ENCODE measurements at regions of chr10 and their contacts with region 1.

Region 1: DNA sequence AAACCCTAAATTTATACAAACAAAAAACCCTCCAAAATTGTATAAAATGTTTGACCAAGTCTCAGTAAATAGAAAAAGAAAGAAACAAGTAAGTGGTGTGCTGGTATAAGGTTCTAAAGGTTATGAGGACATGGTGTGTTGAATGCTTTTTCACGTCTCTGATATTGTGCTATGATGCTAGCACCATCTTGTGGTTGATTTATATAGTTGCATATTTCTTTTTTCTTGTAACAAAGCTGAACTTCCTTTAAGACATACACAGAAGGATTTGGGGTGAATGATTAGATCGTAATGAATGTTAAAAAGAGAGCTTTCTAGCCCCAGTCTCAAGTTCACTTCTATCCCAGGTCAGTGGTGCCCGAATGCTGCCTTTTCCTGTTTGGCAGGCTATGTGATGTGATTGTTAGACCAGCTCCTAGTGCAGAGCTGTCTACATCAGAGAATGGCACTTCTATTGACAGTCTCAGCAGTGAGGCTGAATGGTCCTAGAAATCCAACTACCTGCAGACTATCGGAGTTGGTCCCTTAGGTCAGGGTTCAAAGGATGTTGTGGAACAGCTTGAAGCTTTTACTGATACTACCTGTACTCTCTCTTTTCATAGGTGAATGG is 25.0 kb downstream of the VTI1A start:
- DNase-seq: no peak
- ATAC-seq: peak; percentile 80
- H3K4me3 Mint-ChIP-seq: no peak overlapping the region
- H3K27ac Mint-ChIP-seq: peak overlapping the region; percentile 42
- H3K4me1 Mint-ChIP-seq: peaks cover 6% of the 10 kb centered on the region
- H3K27me3 Mint-ChIP-seq: no peaks in the 10 kb centered on the region

Region 2: GRCh38 chr10:111821871-111822270 is 650.1 kb before region 1 on chr10:
- CTCF ChIA-PET with region 1: no interaction called
- POLR2A ChIA-PET with region 1: no interaction called
- intact Hi-C with region 1: no loop called
- DNase-seq: no peak
- ATAC-seq: no peak
- H3K4me3 Mint-ChIP-seq: no peak overlapping the region
- H3K27ac Mint-ChIP-seq: no peak overlapping the region
- H3K4me1 Mint-ChIP-seq: no peaks in the 10 kb centered on the region
- H3K27me3 Mint-ChIP-seq: no peaks in the 10 kb centered on the region

Region 3: DNA sequence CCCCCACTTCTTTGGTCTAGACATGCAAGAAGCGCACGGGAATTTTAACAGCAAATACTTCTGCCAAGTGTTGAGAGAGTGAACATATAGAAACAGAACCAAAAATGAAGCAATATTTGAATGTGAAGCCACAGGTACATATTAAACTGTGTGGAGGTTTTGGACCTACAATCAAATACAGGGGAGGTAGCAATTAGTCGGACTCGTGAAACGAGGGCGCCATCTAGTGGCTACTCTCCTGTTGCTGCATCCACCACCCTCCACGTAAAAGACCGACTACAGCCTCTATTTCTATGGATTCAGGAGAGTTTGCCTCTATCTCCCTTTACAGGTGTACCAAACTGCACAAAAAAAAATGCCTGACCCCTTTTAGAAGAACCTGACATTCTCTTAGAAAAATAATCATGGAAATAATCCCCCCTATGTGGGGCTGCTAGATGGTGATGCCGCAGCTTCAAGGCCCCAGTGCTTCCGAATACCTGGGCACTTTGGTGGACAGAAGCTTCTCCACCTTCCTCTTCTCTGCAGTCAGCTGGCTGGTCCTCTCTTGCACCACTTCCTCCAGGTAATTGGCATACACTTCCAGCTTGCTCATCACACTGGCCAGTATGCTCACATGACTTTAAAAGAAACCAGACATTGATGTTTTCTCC is 157.0 kb before region 1 on chr10:
- CTCF ChIA-PET with region 1: interaction called, 7 read pairs
- POLR2A ChIA-PET with region 1: no interaction called
- intact Hi-C with region 1: loop called in 1 of 2 experiments (anchors 2 kb)
- DNase-seq: peak; percentile 90
- ATAC-seq: peak; percentile 83
- H3K4me3 Mint-ChIP-seq: no peak overlapping the region
- H3K27ac Mint-ChIP-seq: no peak overlapping the region
- H3K4me1 Mint-ChIP-seq: no peaks in the 10 kb centered on the region
- H3K27me3 Mint-ChIP-seq: peaks cover 22% of the 10 kb centered on the region

Region 4: GRCh38 chr10:112442063-112442462 is 29.9 kb before region 1 on chr10:
- CTCF ChIA-PET with region 1: interaction called, 29 read pairs
- POLR2A ChIA-PET with region 1: interaction called, 5 read pairs
- intact Hi-C with region 1: loop called (anchors 2 to 5 kb)
- DNase-seq: no peak
- ATAC-seq: peak; percentile 43
- H3K4me3 Mint-ChIP-seq: no peak overlapping the region
- H3K27ac Mint-ChIP-seq: peak overlapping the region; percentile 79
- H3K4me1 Mint-ChIP-seq: peaks cover 37% of the 10 kb centered on the region
- H3K27me3 Mint-ChIP-seq: no peaks in the 10 kb centered on the region

Region 5: DNA sequence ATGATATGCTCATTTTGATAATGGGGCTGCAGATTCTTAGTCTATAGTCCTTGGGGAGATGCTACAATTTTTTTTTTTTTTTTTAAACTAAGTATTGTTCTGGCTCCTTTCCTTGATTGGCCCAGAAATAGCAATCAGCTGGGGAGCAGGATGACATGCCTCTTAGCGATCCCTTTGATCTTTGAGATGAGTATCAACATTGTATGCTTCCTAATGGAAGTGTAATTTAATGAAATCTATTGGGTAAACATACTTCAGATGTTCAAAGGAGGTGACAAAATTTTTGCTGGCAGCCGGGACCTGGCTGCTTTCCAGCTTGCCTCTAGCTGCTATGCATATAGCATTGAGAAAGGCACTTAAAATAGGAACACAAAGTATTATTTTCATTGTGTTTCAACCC is 18.6 kb after region 1 on chr10:
- CTCF ChIA-PET with region 1: interaction called, 14 read pairs
- POLR2A ChIA-PET with region 1: no interaction called
- intact Hi-C with region 1: no loop called
- DNase-seq: no peak
- ATAC-seq: no peak
- H3K4me3 Mint-ChIP-seq: no peak overlapping the region
- H3K27ac Mint-ChIP-seq: no peak overlapping the region
- H3K4me1 Mint-ChIP-seq: peaks cover 7% of the 10 kb centered on the region
- H3K27me3 Mint-ChIP-seq: no peaks in the 10 kb centered on the region

Region 6: DNA sequence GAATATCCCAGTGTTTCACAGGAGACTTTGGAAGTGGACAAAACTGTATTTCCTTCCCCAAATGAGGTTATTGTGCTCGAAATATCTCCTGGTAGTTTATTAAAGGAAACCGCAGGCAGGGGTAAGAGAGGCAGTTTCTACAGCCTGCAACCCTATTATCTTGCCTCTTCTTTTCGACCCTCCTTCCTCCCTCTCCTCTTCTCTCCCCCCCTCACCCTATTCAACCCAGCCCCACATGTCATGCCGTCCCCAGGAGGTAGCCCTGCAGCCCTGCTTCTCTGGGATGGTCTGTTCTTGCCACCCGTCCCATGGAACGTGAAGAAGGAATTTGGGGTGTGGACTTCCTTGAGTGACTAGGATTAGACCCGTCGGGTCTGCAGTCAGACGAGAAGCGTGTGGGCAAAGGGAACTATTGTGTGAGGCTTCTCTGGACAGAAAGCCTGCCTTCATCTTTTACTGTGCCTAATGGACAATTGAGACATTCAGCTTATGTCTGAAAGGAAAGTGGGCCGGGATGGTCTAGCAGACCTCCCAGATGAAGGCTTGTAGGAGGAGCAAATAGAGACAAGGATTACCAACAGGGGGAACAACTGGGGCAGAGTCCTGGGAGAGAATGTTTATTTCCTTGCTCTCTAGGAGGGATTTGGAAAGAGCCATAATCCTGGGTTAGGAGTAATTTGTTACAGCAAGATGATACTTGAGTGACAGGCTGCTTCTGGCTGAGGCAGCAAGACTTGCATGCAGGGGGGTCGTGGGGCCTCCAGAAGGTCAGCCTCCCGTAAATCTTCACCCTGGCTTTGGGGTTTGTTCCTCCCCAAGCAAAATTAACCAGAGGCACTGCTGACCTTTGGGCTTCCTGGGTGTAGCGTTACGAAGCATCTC is 555.8 kb after region 1 on chr10:
- CTCF ChIA-PET with region 1: no interaction called
- POLR2A ChIA-PET with region 1: no interaction called
- intact Hi-C with region 1: no loop called
- DNase-seq: no peak
- ATAC-seq: no peak
- H3K4me3 Mint-ChIP-seq: no peak overlapping the region
- H3K27ac Mint-ChIP-seq: no peak overlapping the region
- H3K4me1 Mint-ChIP-seq: no peaks in the 10 kb centered on the region
- H3K27me3 Mint-ChIP-seq: peaks cover 11% of the 10 kb centered on the region

Region 7: DNA sequence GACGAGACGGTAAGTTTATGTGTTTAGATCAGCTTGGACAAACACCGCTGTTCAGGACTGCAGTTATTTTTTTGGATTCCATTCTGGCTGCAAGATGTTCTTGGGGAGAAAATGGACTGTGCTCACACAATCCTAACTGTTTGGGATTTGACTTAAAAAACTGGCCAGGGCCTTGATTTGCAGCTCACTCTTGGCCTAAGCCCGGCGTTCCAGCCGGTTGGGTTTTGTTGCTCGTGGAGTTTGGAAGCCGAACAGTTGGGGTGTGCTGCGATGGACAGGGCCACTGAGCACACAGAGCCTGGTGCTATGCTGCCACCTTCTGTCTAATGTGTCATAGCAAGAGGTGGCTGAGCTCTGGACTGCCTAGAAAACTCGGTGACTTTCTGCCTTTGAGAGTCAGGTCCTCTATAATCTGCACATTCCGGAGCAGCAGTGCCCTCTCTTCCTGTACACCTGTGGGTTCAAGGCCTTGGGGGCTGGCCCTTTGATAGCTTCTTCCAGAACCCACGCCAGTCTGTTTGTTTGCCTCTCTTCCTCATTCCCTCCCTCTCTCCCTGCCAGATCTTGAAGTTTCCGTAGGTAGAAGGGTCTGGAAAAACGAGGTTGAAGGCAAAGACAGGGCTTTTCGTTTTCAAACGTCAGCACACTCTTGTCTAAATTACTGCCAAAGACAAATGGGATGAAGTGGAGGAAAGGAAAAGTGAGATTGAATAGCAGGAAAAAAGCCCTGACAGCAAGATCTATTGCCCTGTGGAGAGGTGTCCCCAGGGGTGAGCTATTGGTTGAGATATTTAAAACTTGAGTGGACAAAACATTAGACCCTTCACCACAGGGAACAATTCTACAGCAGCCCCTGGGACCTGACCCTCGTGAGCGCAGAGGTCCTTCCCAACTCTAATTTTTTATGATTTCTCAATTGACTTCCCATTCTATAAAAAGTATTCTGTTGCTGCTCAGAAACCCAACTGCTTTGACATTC is 913.3 kb after region 1 on chr10:
- CTCF ChIA-PET with region 1: interaction called, 4 read pairs
- POLR2A ChIA-PET with region 1: no interaction called
- intact Hi-C with region 1: loop called (anchors 1 kb)
- DNase-seq: peak; percentile 71
- ATAC-seq: peak; percentile 96
- H3K4me3 Mint-ChIP-seq: no peak overlapping the region
- H3K27ac Mint-ChIP-seq: no peak overlapping the region
- H3K4me1 Mint-ChIP-seq: peaks cover 19% of the 10 kb centered on the region
- H3K27me3 Mint-ChIP-seq: peaks cover 5% of the 10 kb centered on the region